ENCODE measurements at regions of chr18 and their contacts with region 1.

Region 1: GRCh38 chr18:35127201-35127600 is 86.0 kb downstream of the MAPRE2 start:
- DNase-seq: peak; percentile 44
- ATAC-seq: peak; percentile 88
- H3K4me3 Mint-ChIP-seq: no peak overlapping the region
- H3K27ac Mint-ChIP-seq: no peak overlapping the region
- H3K4me1 Mint-ChIP-seq: peaks cover 11% of the 10 kb centered on the region
- H3K27me3 Mint-ChIP-seq: no peaks in the 10 kb centered on the region
- CTCF ChIP-seq: no peak; the same call in 1 of the 2 replicates

Region 2: DNA sequence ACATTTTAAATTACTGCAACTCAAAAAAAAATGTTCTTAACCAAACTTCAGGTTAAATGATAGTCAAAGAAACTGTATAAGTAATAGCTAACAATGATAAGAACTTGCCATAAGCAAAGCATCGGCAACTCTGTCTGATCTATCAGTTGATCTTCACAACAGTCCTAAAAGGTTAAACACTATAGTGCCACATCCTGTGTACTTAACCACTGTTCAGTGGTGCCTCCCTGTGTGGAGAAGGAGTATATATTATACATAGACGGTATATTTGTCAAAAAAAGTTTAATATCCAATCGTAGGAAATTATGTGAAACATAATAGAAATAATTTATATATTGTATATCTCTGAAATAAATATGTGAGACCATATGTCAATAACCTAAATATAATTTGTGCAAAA is 404.1 kb before region 1 on chr18:
- CTCF ChIA-PET with region 1: no interaction called
- POLR2A ChIA-PET with region 1: no interaction called
- DNase-seq: no peak
- ATAC-seq: no peak
- H3K4me3 Mint-ChIP-seq: no peak overlapping the region
- H3K27ac Mint-ChIP-seq: no peak overlapping the region
- H3K4me1 Mint-ChIP-seq: no peaks in the 10 kb centered on the region
- H3K27me3 Mint-ChIP-seq: no peaks in the 10 kb centered on the region
- CTCF ChIP-seq: no peak

Region 3: DNA sequence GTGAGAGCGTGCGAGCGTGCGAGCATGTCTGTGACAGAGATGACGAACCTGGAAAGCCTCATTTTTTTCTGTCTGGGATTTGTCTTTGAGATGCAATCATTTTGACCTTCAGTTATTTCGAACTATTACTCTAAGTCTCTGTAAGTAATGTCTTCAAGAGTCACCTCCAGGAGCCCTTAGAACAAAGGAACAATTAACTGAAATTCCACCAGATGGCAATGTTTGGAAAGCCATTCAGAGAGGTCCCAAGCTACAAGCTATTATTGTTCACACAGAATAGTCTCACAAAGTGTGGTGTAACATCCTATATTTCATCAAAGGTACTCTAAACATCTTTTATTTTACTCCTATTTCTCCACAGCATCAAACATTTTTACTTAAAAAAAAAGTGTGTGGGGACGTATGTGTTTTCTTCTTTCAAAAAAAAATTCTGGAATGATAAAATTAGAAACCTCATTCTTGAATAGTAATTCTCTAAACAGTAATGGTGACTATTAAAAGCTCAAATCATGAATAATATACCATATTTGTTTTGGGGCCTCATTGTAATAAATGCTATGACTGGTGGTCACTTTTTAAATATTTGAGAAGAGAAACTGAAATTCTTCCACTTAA is 121.1 kb before region 1 on chr18:
- CTCF ChIA-PET with region 1: interaction called, 13 read pairs
- POLR2A ChIA-PET with region 1: no interaction called
- DNase-seq: no peak
- ATAC-seq: peak; percentile 90
- H3K4me3 Mint-ChIP-seq: no peak overlapping the region
- H3K27ac Mint-ChIP-seq: no peak overlapping the region
- H3K4me1 Mint-ChIP-seq: no peaks in the 10 kb centered on the region
- H3K27me3 Mint-ChIP-seq: no peaks in the 10 kb centered on the region
- CTCF ChIP-seq: no peak

Region 4: DNA sequence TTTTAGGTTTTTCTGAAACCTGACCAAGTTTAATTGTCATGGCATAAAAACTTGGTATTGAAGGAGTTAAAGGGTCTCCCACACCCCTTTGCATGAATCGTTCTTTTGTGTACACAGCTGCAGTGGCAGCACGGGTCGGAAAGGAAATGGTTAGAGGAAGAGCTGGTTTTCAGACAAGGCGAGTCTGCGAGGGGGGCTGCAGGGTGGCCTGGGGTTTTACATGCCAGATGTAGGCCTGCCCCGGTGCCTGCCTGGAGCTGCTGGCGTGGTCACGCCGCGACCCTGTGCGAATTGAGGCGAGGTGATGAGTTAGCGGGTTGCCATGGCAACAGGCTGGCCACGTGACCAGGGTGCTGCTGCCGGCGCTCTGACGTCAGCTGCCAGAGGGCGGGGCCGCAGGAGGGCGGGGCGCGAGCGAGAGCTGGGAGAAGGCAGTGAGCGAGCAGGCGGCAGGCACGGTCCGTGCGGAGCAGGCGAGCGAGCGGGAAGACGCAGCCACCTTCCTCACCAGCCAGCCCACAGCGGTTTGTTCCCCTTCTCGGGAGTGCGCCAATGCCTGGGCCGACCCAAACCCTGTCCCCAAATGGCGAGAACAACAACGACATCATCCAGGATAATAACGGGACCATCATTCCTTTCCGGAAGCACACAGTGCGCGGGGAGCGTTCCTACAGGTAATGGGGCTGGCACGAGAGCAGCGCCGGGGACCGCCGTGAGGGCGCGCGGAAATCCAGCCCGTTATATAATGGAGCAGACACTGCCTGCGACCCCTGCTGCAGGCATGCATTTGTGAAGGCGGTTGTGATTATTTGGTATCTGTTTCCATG is 86.0 kb before region 1 on chr18 and contains the start of gene MAPRE2:
- CTCF ChIA-PET with region 1: interaction called, 18 read pairs
- POLR2A ChIA-PET with region 1: interaction called, 5 read pairs
- DNase-seq: peak; percentile 99
- ATAC-seq: peak; percentile 92
- H3K4me3 Mint-ChIP-seq: peak within 1 kb of the TSS; percentile 95
- H3K27ac Mint-ChIP-seq: peak within 1 kb of the TSS; percentile 81
- H3K4me1 Mint-ChIP-seq: peaks cover 52% of the 10 kb centered on the region
- H3K27me3 Mint-ChIP-seq: no peaks in the 10 kb centered on the region; the same call in 1 of the 2 replicates
- CTCF ChIP-seq: no peak
- total RNA-seq, gene MAPRE2: 20.4 to 21.2 TPM (median 20.8 TPM) in 3 replicates

Region 5: GRCh38 chr18:35322486-35323458 is 195.6 kb after region 1 on chr18:
- CTCF ChIA-PET with region 1: no interaction called
- POLR2A ChIA-PET with region 1: no interaction called
- DNase-seq: no peak
- ATAC-seq: no peak
- H3K4me3 Mint-ChIP-seq: no peak overlapping the region
- H3K27ac Mint-ChIP-seq: no peak overlapping the region
- H3K4me1 Mint-ChIP-seq: peaks cover 9% of the 10 kb centered on the region
- H3K27me3 Mint-ChIP-seq: peaks cover 4% of the 10 kb centered on the region
- CTCF ChIP-seq: no peak

Region 6: DNA sequence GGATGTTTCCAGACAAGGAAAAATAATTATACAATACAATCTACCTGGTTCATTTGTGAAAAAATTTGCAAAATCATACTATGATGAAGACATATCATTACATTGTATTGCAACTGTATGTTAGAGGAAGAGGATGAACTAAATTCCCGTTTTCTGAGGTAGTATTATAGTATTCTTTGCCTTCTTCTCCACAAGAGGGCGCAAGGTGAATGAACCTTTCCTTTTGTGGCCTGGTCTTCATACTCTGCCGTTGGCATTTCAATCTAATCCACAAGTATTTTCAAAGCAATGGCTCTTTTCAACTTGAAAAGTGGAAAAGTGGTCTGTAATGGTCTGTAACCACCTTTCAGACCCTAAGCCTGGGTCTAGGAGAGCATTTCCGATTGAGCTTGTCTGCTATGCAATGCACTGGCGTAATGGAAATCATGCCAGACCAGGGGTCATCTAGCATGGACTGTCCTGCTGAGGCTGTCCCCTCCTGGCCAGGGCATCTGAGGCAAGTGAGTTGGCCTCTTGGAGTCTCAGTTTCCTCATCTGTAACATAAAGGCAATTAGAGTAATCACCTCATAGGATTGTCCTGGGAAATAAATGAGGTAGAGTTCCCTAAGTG is 280.8 kb after region 1 on chr18:
- CTCF ChIA-PET with region 1: no interaction called
- POLR2A ChIA-PET with region 1: no interaction called
- DNase-seq: no peak
- ATAC-seq: peak; percentile 76
- H3K4me3 Mint-ChIP-seq: no peak overlapping the region
- H3K27ac Mint-ChIP-seq: no peak overlapping the region
- H3K4me1 Mint-ChIP-seq: peaks cover 16% of the 10 kb centered on the region
- H3K27me3 Mint-ChIP-seq: peaks cover 6% of the 10 kb centered on the region
- CTCF ChIP-seq: peak; percentile 65

Measured in WTC11 (cell line).